PC-3 (cell line): ENCODE measurements at regions of chr11 and their contacts with region 1.

Region 1: GRCh38 chr11:24723231-24723630 is 226.4 kb downstream of the LUZP2 start:
- DNase-seq: peak; percentile 62
- ATAC-seq: peak; percentile 93
- H3K4me3 ChIP-seq: no peak overlapping the region
- H3K27ac ChIP-seq: peak overlapping the region; percentile 54
- H3K4me1 ChIP-seq: peaks cover 8% of the 10 kb centered on the region; the same call in 1 of the 2 replicates
- H3K27me3 ChIP-seq: no peaks in the 10 kb centered on the region
- CTCF ChIP-seq: no peak

Region 2: DNA sequence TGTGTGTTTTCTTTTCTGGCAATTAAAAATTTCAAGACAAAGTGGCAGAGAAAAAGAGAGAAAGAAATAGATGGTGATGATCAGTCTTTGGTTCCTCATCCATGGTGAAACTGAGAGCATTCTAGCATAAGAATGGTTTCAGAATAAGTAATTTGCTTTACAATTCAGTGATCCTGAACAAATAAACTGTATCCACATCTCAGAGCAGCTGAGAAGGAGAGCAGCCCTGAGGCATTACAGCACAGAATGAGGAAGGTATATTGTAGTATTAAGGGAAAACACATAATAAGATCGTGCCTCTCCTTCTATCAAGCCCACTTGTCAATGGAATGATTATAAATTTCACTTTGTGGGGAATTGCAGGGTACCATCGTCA is 209.0 kb before region 1 on chr11:
- CTCF ChIA-PET with region 1: no interaction called
- POLR2A ChIA-PET with region 1: no interaction called
- intact Hi-C with region 1: loop called (anchors 1 kb)
- DNase-seq: peak; percentile 58
- ATAC-seq: peak; percentile 60
- H3K4me3 ChIP-seq: no peak overlapping the region
- H3K27ac ChIP-seq: no peak overlapping the region
- H3K4me1 ChIP-seq: peaks cover 39% of the 10 kb centered on the region
- H3K27me3 ChIP-seq: no peaks in the 10 kb centered on the region
- CTCF ChIP-seq: no peak

Region 3: GRCh38 chr11:24859801-24860300 is 136.6 kb after region 1 on chr11:
- CTCF ChIA-PET with region 1: no interaction called
- POLR2A ChIA-PET with region 1: no interaction called
- intact Hi-C with region 1: loop called (anchors 5 kb)
- DNase-seq: no peak
- ATAC-seq: no peak
- H3K4me3 ChIP-seq: no peak overlapping the region
- H3K27ac ChIP-seq: no peak overlapping the region
- H3K4me1 ChIP-seq: peaks cover 19% of the 10 kb centered on the region
- H3K27me3 ChIP-seq: no peaks in the 10 kb centered on the region
- CTCF ChIP-seq: no peak

Region 4: DNA sequence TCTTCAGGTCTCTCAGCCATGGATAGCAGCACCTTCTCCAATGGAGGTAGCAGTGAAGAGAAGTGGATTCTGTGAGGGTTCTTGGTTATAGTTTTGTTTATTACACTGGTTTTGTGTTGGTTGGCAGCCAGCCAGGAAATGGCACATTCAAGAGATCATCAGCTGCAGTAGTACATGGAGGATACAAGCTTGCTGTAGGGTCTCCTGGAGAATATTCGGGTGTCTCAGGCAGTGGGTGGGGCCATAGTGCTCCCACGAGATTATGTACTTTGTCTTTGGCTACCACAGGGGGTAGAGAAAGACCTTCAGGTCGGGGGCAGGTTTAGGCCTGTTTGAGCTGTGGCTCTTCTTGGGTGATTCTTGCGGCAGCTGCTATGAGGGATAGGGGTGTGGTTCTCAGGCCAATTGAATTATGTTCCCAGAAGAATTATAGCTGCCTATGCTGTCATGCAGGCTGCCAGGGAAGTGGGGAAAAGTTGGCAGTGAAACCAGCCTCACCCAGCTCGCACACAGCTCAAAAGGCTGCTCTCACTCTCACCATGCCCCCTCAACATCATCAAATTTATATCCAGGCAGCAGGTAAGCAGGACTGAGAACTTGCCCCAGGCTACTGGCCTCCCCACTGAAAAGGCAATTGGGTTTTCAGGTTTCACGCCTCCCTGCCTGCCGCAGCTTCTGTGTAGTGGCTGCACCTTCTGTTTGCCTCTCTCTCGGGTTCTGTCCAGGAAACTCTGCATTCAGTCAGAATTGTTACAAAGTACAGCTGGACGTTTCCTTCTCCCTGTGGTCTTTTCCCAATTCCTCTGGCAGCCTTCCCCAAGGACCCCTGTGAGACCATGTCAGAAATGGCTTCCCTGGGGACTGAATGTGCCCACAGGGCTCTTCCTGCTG is 209.1 kb after region 1 on chr11:
- CTCF ChIA-PET with region 1: no interaction called
- POLR2A ChIA-PET with region 1: no interaction called
- intact Hi-C with region 1: no loop called
- DNase-seq: no peak
- ATAC-seq: no peak
- H3K4me3 ChIP-seq: no peak overlapping the region
- H3K27ac ChIP-seq: no peak overlapping the region
- H3K4me1 ChIP-seq: peaks cover 8% of the 10 kb centered on the region
- H3K27me3 ChIP-seq: no peaks in the 10 kb centered on the region
- CTCF ChIP-seq: no peak